ENCODE measurements at regions of chr5 and their contacts with region 1.

Region 1: DNA sequence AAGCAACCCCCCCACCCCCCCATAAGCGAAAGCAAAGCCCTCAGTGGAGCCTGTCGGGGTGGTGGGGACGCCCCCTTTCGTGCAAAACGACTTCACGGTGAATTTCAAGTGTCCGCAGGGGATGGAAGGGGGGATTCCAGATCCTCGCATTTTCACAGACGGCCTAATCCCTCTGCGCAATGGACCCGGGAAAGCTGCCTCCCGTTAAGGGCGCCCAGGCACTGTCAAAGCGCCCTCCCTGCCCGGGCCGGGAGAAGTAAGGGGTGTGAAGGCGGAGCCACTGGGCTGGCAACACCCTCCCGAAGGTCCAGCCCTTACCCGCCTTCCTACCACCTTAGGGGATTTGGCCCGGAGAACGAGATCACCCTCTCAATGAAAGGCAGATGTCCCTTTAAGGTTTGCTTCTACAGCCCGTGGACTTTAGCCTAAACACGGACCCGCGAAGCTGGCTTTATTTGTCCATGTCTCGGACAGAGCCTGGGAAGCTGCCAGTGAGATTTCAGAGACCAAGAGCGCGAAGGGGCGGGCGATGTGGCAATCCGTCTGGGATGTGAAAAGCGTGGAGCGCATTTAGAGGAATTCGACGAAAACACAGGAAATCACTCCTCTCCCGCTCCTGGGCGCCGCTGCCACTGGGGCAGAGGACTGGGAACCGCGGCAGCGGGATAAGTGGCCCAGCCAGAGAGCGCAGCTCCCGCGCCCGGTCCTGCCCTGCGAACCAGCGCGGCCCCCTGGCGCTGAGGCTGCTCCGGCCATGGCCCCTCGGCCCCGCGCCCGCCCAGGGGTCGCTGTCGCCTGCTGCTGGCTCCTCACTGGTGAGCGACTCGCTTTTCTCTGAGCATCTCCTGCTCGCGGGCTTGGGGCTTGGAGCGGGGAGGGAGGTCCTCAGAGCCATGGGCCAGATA is at the starts of genes ITGA1 and PELO:
- DNase-seq: peak; percentile 69
- H3K4me3 ChIP-seq: peak within 1 kb of the TSS; percentile 67 to 72 (median 69)
- H3K27ac ChIP-seq: peak within 1 kb of the TSS; percentile 72
- H3K4me1 ChIP-seq: peaks cover 21% of the 10 kb centered on the region
- H3K27me3 ChIP-seq: no peaks in the 10 kb centered on the region
- CTCF ChIP-seq: peak in 1 of 2 donors; percentile 38
- total RNA-seq, gene ITGA1: 2.7 to 14.6 TPM
- total RNA-seq, gene PELO: 20.5 to 24.4 TPM

Region 2: GRCh38 chr5:52693280-52693679 is 94.6 kb before region 1 on chr5:
- CTCF ChIA-PET with region 1: no interaction called
- dilution Hi-C with region 1: no loop called
- in situ Hi-C with region 1: no loop called
- intact Hi-C with region 1: loop called (anchors 1 kb)
- DNase-seq: peak; percentile 40
- H3K4me3 ChIP-seq: no peak overlapping the region
- H3K27ac ChIP-seq: no peak overlapping the region
- H3K4me1 ChIP-seq: no peaks in the 10 kb centered on the region
- H3K27me3 ChIP-seq: peaks cover 6% of the 10 kb centered on the region
- CTCF ChIP-seq: peak; percentile 60 to 80

Region 3: GRCh38 chr5:52799983-52800393 is 12.1 kb after region 1 on chr5:
- CTCF ChIA-PET with region 1: no interaction called
- dilution Hi-C with region 1: no loop called
- in situ Hi-C with region 1: no loop called
- intact Hi-C with region 1: loop called (anchors 1 kb)
- DNase-seq: peak; percentile 90
- H3K4me3 ChIP-seq: peak overlapping the region; percentile 65 to 91 (median 71)
- H3K27ac ChIP-seq: peak overlapping the region; percentile 94
- H3K4me1 ChIP-seq: peaks cover 20% of the 10 kb centered on the region
- H3K27me3 ChIP-seq: no peaks in the 10 kb centered on the region
- CTCF ChIP-seq: no peak

Region 4: GRCh38 chr5:52825826-52826225 is 38.0 kb after region 1 on chr5:
- CTCF ChIA-PET with region 1: no interaction called
- dilution Hi-C with region 1: no loop called
- in situ Hi-C with region 1: no loop called
- intact Hi-C with region 1: no loop called
- DNase-seq: no peak
- H3K4me3 ChIP-seq: no peak overlapping the region
- H3K27ac ChIP-seq: no peak overlapping the region
- H3K4me1 ChIP-seq: no peaks in the 10 kb centered on the region
- H3K27me3 ChIP-seq: no peaks in the 10 kb centered on the region
- CTCF ChIP-seq: no peak

Region 5: DNA sequence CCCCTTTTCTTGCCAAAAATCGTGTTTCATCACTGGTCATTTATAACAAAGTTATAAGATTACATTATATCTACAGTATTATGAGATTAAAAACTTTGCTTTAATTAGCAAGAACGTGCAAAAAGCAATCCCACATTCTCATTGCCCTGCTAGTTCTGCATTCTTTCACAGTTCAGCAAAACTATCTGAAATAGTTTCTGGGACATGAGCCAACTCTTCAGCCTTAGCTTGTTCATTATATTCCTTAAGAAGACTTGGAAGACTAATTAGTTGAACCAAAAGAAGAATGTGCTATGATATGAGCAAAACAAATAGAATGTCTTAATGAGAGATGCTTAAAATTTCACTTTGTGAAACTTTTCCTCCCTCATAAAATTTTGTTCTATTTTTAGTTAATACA is 76.5 kb after region 1 on chr5:
- CTCF ChIA-PET with region 1: no interaction called
- dilution Hi-C with region 1: no loop called
- in situ Hi-C with region 1: no loop called
- intact Hi-C with region 1: no loop called
- DNase-seq: no peak
- H3K4me3 ChIP-seq: no peak overlapping the region
- H3K27ac ChIP-seq: no peak overlapping the region
- H3K4me1 ChIP-seq: peaks cover 4% of the 10 kb centered on the region
- H3K27me3 ChIP-seq: no peaks in the 10 kb centered on the region
- CTCF ChIP-seq: no peak

Region 6: DNA sequence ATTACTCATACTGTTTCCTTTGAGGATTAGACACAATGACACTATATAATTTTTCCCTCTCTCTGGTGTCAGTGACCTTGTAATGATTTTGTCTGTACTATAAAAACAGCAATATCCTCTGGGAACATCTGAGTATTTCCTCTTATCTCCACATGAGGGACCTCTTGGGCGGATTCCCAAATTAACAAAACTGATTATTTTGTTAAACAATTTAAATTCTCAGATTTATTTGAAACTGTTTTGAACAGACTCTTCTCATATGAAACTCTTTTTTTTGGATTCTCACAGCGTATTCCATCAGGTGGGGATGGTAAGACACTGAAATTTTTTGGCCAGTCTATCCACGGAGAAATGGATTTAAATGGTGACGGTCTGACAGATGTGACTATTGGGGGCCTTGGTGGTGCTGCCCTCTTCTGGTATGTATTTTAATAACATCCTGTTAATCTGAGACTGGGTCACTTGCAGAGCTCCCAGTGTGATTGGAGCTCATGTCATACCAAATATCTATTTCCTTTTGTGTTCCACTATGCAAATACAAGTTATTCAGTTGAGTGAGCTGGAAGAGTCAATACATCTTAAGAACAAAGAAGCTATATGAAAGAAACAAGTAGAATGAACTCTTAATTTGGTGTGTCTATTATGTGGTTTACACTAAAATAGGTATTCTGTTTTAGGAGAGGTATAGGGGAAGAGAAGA is 127.5 kb after region 1 on chr5:
- CTCF ChIA-PET with region 1: interaction called, 4 read pairs
- dilution Hi-C with region 1: no loop called
- in situ Hi-C with region 1: loop called (anchors 10 kb)
- intact Hi-C with region 1: loop called (anchors 1 kb)
- DNase-seq: peak; percentile 66
- H3K4me3 ChIP-seq: peak overlapping the region; percentile 25 to 52 (median 39)
- H3K27ac ChIP-seq: no peak overlapping the region
- H3K4me1 ChIP-seq: no peaks in the 10 kb centered on the region
- H3K27me3 ChIP-seq: no peaks in the 10 kb centered on the region
- CTCF ChIP-seq: peak; percentile 43 to 64

Region 7: GRCh38 chr5:52922386-52922785 is 134.5 kb after region 1 on chr5:
- CTCF ChIA-PET with region 1: no interaction called
- dilution Hi-C with region 1: no loop called
- in situ Hi-C with region 1: loop called (anchors 10 kb)
- intact Hi-C with region 1: no loop called
- DNase-seq: peak; percentile 96
- H3K4me3 ChIP-seq: no peak overlapping the region
- H3K27ac ChIP-seq: peak overlapping the region; percentile 61
- H3K4me1 ChIP-seq: peaks cover 12% of the 10 kb centered on the region
- H3K27me3 ChIP-seq: no peaks in the 10 kb centered on the region
- CTCF ChIP-seq: no peak

Region 8: DNA sequence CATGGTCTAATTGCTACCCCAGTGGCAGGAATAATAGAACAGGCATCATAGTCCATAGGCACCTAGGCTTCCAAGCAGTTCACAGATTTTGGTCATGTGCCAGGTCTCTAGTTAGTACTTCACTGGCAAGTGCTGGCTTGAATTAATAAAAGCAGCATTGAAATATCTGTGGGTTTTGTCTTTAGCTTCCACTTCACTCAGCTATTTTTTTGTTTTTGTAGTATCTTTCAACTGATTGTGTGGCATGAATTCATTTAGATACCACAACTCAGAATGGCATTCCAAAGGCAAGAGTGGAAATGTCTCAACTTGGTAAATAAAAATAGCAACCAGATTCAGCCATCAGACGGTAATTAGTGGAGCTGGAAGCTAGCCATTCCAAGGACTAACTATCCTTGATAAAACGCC is 173.4 kb after region 1 on chr5:
- CTCF ChIA-PET with region 1: no interaction called
- dilution Hi-C with region 1: no loop called
- in situ Hi-C with region 1: no loop called
- intact Hi-C with region 1: loop called (anchors 5 kb)
- DNase-seq: peak; percentile 89
- H3K4me3 ChIP-seq: no peak overlapping the region
- H3K27ac ChIP-seq: peak overlapping the region; percentile 68
- H3K4me1 ChIP-seq: peaks cover 35% of the 10 kb centered on the region
- H3K27me3 ChIP-seq: no peaks in the 10 kb centered on the region
- CTCF ChIP-seq: no peak

Region 9: GRCh38 chr5:53095931-53096525 is 308.2 kb after region 1 on chr5:
- CTCF ChIA-PET with region 1: no interaction called
- dilution Hi-C with region 1: no loop called
- in situ Hi-C with region 1: no loop called
- intact Hi-C with region 1: loop called (anchors 1 kb)
- DNase-seq: peak; percentile 37
- H3K4me3 ChIP-seq: no peak overlapping the region
- H3K27ac ChIP-seq: no peak overlapping the region
- H3K4me1 ChIP-seq: no peaks in the 10 kb centered on the region
- H3K27me3 ChIP-seq: no peaks in the 10 kb centered on the region
- CTCF ChIP-seq: peak; percentile 77 to 80

Measured in mammary epithelial cell (primary cell).